IMR-90 (cell line): ENCODE measurements at regions of chr5 and their contacts with region 1.

Region 1: DNA sequence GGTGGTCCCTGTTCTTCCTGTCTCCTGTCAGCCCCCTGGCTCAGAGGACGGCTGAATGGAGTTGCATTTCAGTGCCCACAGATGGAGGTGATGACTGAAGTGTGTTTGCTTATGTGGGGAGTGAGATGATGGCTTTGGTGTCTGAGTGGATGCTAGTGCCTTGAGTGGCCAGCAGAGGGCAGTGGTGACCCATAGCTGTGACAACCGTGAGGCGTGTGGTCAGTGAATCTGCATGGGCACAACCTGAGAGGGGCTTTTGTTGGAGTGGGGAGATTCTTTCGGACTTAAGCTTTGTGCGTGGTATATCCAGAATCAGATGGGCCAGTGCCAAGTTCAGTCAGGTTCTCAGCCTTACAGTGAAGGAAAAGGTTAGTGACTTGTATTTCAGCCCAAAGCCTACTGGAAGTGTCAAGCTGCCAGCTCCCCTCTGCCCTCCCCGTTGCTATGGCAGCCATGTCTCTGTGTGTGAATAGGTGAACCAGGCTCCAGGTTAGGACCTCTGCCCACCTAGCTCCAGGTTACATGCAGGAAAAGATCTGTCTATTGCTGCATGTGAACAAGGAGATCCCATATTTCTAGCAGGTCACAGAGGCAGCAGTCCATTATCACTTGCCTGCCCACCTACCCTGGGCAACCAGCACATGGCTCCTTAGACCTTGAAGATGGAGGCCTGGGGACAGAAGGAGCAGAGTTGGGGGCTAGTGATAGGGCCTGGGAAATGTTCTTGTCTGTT is 14.7 kb upstream of the CXXC5 start:
- DNase-seq: peak; percentile 73
- ATAC-seq: peak; percentile 59
- H3K4me3 ChIP-seq: no peak overlapping the region
- H3K27ac ChIP-seq: no peak overlapping the region
- H3K4me1 ChIP-seq: peaks cover 20% of the 10 kb centered on the region
- H3K27me3 ChIP-seq: no peaks in the 10 kb centered on the region
- CTCF ChIP-seq: peak; percentile 99
- POLR2A ChIP-seq: 0 out of 2 replicates have a peak, but pooled peaks have one; percentile 43
- RAD21 ChIP-seq: peak; percentile 95

Region 2: DNA sequence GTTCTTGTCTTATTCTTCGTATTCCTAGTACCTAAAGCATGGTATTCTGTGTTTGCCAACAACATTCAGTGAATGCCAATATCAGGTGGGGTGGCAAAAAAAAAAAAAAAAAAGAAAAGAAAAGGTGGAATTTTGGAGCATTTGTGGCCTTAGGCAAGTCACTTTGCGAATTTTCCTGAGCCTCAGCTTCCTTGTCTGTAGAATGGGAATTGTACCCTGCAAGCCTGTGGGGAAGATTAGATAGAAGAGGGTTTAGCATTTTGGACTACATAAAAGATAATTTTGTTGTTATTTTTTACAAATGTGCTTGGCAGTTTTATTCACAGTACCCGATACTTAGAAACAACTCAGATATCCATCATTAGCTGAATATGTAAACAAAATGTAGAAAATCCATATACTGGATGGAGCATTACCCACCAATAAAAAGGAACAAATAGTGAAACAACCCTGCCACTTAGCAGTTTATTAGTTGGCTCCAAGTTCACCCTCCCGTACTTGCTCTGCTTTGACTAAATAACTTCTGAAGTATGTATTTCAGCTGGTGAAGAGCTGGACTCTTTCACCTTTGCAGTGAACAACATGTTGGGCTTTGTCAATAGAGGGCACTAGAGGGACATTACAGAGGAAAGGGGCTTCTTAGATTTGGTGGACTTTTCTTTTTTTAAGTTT is 58.7 kb before region 1 on chr5:
- CTCF ChIA-PET with region 1: interaction called, 3 read pairs
- POLR2A ChIA-PET with region 1: no interaction called
- dilution Hi-C with region 1: no loop called
- in situ Hi-C with region 1: no loop called
- intact Hi-C with region 1: loop called (anchors 5 kb)
- DNase-seq: peak; percentile 62
- ATAC-seq: peak; percentile 77
- H3K4me3 ChIP-seq: no peak overlapping the region
- H3K27ac ChIP-seq: no peak overlapping the region
- H3K4me1 ChIP-seq: peaks cover 11% of the 10 kb centered on the region
- H3K27me3 ChIP-seq: no peaks in the 10 kb centered on the region
- CTCF ChIP-seq: peak; percentile 63
- POLR2A ChIP-seq: no peak
- RAD21 ChIP-seq: peak; percentile 58

Region 3: GRCh38 chr5:139690064-139690802 is 56.8 kb after region 1 on chr5:
- CTCF ChIA-PET with region 1: interaction called, 26 read pairs
- POLR2A ChIA-PET with region 1: no interaction called
- dilution Hi-C with region 1: no loop called
- in situ Hi-C with region 1: no loop called
- intact Hi-C with region 1: loop called (anchors 1 kb)
- DNase-seq: peak; percentile 61
- ATAC-seq: peak; percentile 56
- H3K4me3 ChIP-seq: no peak overlapping the region
- H3K27ac ChIP-seq: peak overlapping the region; percentile 26; the same call in 1 of the 2 replicates
- H3K4me1 ChIP-seq: peaks cover 35% of the 10 kb centered on the region
- H3K27me3 ChIP-seq: no peaks in the 10 kb centered on the region
- CTCF ChIP-seq: peak; percentile 58
- POLR2A ChIP-seq: no peak
- RAD21 ChIP-seq: peak; percentile 54

Region 4: DNA sequence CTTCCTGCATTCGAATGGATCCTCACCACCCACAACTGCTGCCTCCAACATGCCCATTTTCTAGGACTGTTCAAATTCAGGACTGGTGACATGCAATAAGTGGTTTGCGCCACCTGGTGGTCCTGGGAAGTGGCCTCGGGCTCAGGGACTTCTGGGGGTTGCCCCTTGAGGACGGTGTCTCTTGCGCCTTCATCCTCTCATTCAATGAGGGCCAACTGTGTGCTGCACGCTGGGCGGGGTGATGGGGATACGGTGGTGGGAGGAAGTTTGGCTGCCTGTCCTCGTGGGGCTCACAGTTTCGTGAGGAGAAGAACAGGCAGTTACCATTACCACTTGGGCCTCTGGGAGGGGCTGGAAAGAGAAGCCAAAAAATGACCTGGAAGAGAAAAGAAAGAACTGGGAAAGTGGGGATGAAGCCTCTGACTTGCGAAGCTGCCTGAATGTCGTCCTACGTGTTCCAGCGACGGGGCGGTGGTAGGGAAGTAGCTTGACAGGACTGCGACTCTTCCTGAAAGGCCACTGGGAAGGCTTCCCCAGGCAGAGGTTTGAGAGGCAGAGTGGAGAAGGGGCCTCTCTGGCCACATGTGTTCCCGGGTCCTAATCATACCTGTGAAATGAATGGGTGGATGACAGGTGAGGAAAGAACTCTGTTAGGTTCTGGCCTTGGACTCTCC is 211.1 kb after region 1 on chr5:
- CTCF ChIA-PET with region 1: no interaction called
- POLR2A ChIA-PET with region 1: no interaction called
- dilution Hi-C with region 1: no loop called
- in situ Hi-C with region 1: no loop called
- intact Hi-C with region 1: loop called (anchors 10 kb)
- DNase-seq: peak; percentile 64
- ATAC-seq: peak; percentile 84
- H3K4me3 ChIP-seq: no peak overlapping the region
- H3K27ac ChIP-seq: no peak overlapping the region
- H3K4me1 ChIP-seq: no peaks in the 10 kb centered on the region
- H3K27me3 ChIP-seq: peaks cover 53% of the 10 kb centered on the region
- CTCF ChIP-seq: peak; percentile 69
- POLR2A ChIP-seq: no peak
- RAD21 ChIP-seq: peak; percentile 66